SK-N-SH (cell line): ENCODE measurements at regions of chr3 and their contacts with region 1.

Region 1: GRCh38 chr3:51718547-51719409 is 11.9 kb downstream of the GRM2 start:
- DNase-seq: peak; percentile 89
- H3K4me3 ChIP-seq: peak overlapping the region in 1 of 2 experiments; percentile 26; a peak in 1 of 4 replicates
- H3K27ac ChIP-seq: no peak overlapping the region
- H3K4me1 ChIP-seq: peaks cover 0 to 2% of the 10 kb centered on the region in 2 experiments; a peak in 1 of 4 replicates
- H3K27me3 ChIP-seq: no peaks in the 10 kb centered on the region
- CTCF ChIP-seq: peak; percentile 71
- EP300 ChIP-seq: no peak
- RAD21 ChIP-seq: peak; percentile 78

Region 2: DNA sequence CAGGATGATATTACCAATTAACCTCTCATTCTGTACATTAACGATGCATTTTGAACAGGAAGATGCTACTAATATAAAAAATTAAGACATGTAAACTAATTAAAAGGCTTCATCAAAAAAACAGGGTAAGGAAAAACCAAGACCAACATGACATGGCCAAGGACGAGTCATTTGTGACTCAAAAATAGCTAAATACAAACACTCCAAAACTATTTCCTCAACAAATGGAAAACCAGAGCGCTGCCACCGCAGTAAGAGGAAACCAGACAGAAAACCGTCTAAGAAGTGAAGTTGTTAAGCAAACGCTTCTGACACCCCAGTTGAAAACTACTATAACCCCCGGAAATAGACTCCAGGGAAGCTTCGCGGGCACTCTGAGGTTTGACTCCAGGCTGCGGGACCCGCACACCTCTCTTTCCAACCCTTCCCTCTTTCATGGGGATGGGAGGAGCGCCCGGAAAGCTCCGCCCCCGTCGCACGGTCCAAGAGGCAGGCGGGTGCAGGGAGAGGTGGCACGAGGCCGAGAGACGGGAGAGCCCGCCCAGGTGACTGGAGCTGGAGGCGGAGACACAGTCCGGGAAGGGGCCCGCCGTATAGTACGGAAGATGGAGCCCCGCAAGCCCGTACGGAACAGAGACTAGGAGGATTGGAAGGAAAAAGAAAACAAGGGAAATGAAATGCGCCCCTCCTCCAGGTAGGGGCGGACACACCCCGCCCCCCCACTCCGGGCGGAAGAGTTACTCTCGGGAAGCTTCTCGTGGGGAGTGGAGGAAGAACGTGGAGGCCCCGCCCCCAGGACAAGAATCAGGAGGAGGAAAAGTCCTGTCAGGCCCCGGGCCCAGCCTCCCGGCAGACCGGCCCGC is 219.7 kb before region 1 on chr3:
- CTCF ChIA-PET with region 1: interaction called, 13 read pairs
- POLR2A ChIA-PET with region 1: no interaction called
- DNase-seq: peak; percentile 88
- H3K4me3 ChIP-seq: peak overlapping the region; percentile 52 to 75
- H3K27ac ChIP-seq: peak overlapping the region; percentile 85 to 90
- H3K4me1 ChIP-seq: peaks cover 0 to 4% of the 10 kb centered on the region in 2 experiments; a peak in 2 of 4 replicates
- H3K27me3 ChIP-seq: no peaks in the 10 kb centered on the region
- CTCF ChIP-seq: no peak
- EP300 ChIP-seq: no peak
- RAD21 ChIP-seq: no peak

Region 3: GRCh38 chr3:51682079-51682478 is 36.7 kb before region 1 on chr3:
- CTCF ChIA-PET with region 1: interaction called, 13 read pairs
- POLR2A ChIA-PET with region 1: no interaction called
- DNase-seq: peak; percentile 92
- H3K4me3 ChIP-seq: no peak overlapping the region
- H3K27ac ChIP-seq: peak overlapping the region; percentile 36 to 75; a peak in 3 of 4 replicates
- H3K4me1 ChIP-seq: peaks cover 4 to 11% of the 10 kb centered on the region in 2 experiments; a peak in 2 of 4 replicates
- H3K27me3 ChIP-seq: no peaks in the 10 kb centered on the region
- CTCF ChIP-seq: peak; percentile 79
- EP300 ChIP-seq: peak in 1 of 2 experiments; percentile 56; a peak in 2 of 4 replicates
- RAD21 ChIP-seq: peak; percentile 96

Region 4: DNA sequence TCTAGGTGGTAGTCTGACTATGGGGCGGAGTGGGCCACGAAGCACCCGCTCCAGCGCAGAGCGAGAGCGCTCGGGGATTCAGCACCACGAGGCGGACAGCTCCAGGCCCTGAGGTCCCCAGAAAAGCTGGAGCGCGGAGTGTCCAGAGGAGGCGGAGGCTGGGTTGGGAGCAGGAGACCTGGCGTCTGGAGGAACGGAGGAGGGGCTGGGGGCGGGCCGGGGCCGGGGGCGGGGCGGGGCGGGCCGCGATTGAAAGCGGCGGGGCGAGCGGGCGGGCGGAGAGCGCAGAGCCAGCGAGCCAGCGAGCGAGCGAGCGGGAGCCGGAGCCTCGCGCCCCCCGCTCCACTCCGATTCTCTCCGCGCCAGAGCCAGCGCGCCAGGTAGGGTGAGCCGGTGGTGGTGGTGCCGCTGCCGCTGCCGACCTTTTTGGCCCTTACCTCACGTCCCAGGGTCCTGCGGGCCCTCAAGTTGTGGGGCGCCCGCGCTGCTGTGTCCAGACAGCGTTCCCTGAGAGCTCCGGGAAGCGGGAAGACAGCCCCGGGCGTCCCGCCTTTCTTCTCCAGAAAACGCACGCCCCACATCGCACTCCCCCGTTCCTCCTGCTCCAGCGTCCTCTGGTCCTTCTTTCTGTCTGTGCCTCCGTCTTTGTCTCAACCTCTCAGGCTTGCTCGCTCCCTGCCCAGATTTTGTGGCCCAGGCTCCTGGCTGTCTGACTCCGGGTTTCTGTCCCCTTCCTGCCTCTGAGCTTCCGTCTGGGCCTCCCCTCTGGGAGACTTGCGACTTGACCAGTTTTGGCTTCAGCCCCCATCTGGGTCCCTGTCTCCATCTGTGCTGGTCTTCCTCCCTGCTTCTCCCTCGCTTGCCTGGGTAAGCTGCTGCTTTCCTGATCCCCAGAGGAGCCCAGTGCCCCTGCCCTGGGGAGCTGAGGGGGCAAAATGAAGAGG is 11.7 kb before region 1 on chr3 and contains the start of gene GRM2:
- CTCF ChIA-PET with region 1: interaction called, 89 read pairs
- POLR2A ChIA-PET with region 1: no interaction called
- DNase-seq: peak; percentile 97
- H3K4me3 ChIP-seq: peak within 1 kb of the TSS in 1 of 2 experiments; percentile 43; a peak in 3 of 4 replicates
- H3K27ac ChIP-seq: no peak within 1 kb of the TSS
- H3K4me1 ChIP-seq: peaks cover 0 to 28% of the 10 kb centered on the region in 2 experiments; a peak in 1 of 4 replicates
- H3K27me3 ChIP-seq: no peaks in the 10 kb centered on the region
- CTCF ChIP-seq: no peak
- EP300 ChIP-seq: no peak
- RAD21 ChIP-seq: no peak
- polyA plus RNA-seq, gene GRM2: 0.15 and 0.24 TPM in 2 replicates

Region 5: DNA sequence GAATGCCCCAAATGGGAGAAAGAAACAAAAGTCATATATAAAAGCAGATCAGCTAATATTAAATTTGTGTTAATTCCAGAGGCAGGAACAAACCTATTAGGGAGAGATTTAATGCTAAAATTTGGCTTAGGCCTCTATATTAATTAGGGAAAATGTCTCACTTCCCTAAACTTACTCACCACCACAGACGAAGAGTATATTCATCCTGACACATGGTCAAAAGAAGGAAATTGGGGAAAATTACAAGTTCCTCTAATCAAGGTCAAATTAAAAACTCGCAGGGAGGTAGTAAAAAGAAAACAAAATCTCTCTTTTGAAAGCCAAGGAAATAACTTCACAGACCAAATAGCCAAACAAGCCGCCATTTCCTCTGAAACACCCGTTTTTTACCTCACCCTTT is 20.3 kb after region 1 on chr3:
- CTCF ChIA-PET with region 1: interaction called, 16 read pairs
- POLR2A ChIA-PET with region 1: no interaction called
- DNase-seq: no peak
- H3K4me3 ChIP-seq: no peak overlapping the region
- H3K27ac ChIP-seq: no peak overlapping the region
- H3K4me1 ChIP-seq: no peaks in the 10 kb centered on the region
- H3K27me3 ChIP-seq: no peaks in the 10 kb centered on the region
- CTCF ChIP-seq: no peak
- EP300 ChIP-seq: no peak
- RAD21 ChIP-seq: no peak

Region 6: DNA sequence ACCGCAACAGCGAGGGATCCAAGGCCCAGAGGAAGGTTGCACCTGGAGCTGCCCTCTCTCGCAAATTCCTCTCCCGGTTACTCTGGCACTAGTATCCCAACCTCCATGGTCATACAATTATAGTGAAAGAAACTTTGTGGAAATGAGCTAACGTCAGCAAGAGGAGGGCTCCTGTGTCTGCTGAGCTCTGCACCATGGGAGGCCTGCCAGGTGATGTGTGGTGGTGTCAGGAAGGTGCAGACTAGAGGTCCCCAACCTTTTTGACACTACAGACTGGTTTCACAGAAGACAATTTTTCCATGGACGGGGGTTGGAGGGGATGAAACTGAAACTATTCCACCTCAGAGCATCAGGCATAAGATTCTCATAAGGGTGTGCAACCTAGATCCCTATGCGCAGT is 73.4 kb after region 1 on chr3:
- CTCF ChIA-PET with region 1: interaction called, 138 read pairs
- POLR2A ChIA-PET with region 1: no interaction called
- DNase-seq: no peak
- H3K4me3 ChIP-seq: no peak overlapping the region
- H3K27ac ChIP-seq: no peak overlapping the region
- H3K4me1 ChIP-seq: no peaks in the 10 kb centered on the region
- H3K27me3 ChIP-seq: no peaks in the 10 kb centered on the region; the same call in 1 of the 2 replicates
- CTCF ChIP-seq: no peak
- EP300 ChIP-seq: no peak
- RAD21 ChIP-seq: no peak

Region 7: GRCh38 chr3:51813539-51813938 is 94.8 kb after region 1 on chr3:
- CTCF ChIA-PET with region 1: interaction called, 19 read pairs
- POLR2A ChIA-PET with region 1: no interaction called
- DNase-seq: peak; percentile 84
- H3K4me3 ChIP-seq: no peak overlapping the region
- H3K27ac ChIP-seq: peak overlapping the region in 1 of 2 experiments; percentile 91; a peak in 2 of 4 replicates
- H3K4me1 ChIP-seq: peaks cover 0 to 20% of the 10 kb centered on the region in 2 experiments; a peak in 1 of 4 replicates
- H3K27me3 ChIP-seq: no peaks in the 10 kb centered on the region; the same call in 1 of the 2 replicates
- CTCF ChIP-seq: no peak
- EP300 ChIP-seq: peak in 1 of 2 experiments; percentile 75; a peak in 2 of 4 replicates
- RAD21 ChIP-seq: peak; percentile 6

Region 8: DNA sequence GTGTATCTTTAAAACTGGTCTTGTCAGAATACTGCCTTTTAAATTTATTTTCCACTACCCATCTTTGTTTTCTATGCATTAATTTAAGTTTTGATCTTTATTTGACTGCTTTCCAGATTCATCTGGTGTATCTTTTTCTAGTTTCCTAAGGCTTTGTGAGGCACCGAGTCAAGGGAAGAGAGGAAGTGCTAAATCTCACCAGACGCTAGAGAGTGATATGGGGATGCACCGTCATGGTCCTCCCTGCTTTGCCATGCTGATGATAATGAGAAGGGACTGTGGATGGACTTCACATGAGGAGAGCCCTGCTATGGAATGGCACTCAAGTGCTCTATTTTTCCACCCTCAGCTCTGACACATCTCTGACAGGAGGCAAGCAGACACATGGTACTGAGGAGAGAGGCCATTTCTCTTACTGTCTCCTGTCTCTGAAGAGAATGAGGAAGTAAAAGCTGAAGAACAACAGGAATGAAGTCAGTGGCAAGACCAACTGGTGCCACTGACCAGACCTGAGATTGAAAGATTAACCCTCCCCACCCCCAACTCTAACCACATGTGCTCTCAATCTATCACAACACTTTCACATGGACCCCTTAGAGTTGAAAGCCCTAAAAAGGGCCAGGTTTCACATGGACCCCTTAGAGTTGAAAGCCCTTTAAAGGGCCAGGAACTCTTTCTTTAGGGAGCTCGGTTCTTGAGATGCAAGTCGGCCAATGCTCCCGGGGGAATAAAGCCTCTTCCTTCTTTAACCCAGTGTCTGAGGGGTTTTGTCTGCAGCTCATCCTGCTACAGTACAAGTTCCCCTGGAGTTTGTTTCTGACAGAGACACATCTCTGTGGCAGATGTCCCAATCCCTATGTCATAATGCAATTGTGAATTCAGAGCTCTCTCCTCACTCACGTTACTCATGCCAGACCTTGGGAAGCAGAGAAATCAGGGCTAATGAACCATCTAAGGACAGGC is 142.2 kb after region 1 on chr3 and contains the start of gene IQCF2:
- CTCF ChIA-PET with region 1: no interaction called
- POLR2A ChIA-PET with region 1: no interaction called
- DNase-seq: no peak
- H3K4me3 ChIP-seq: no peak within 1 kb of the TSS
- H3K27ac ChIP-seq: no peak within 1 kb of the TSS
- H3K4me1 ChIP-seq: no peaks in the 10 kb centered on the region
- H3K27me3 ChIP-seq: no peaks in the 10 kb centered on the region; the same call in 1 of the 2 replicates
- CTCF ChIP-seq: no peak
- EP300 ChIP-seq: no peak
- RAD21 ChIP-seq: no peak
- polyA plus RNA-seq, gene IQCF2: not detected in 2 replicates